ENCODE measurements at regions of chr3 and their contacts with region 1.

Region 1: DNA sequence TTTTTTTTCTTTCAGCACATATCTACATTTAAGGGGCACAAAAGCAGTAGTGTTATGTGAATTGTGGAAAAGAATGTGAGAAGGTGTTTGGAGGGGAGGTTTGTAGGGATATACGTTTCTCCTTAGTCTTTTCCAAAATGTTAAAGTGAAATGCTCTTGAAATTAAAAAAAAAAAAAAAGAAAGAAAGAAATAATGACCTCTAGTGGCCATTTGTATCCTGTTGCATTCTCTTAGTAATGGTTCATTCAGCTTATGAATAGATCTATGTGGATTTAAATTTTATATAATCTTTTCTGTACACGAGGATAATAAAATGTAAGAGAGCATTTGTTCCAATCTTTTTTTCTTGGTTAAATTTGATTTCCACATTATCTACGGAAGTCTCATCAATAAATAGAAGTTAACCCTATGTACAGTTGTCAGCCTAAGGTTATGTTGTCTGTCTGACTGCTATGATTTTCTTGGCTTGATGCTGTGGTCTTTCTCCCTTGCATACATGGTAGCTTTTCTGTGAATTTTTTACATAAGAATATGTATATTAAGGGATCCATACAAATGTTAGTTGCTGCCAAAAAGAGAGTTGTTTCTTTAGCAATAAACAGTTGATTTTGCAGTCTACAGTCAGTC is 1.7 kb downstream of the P2RY13 start:
- DNase-seq: no peak
- H3K27ac ChIP-seq: no peak overlapping the region
- CTCF ChIP-seq: peak; percentile 80

Region 2: DNA sequence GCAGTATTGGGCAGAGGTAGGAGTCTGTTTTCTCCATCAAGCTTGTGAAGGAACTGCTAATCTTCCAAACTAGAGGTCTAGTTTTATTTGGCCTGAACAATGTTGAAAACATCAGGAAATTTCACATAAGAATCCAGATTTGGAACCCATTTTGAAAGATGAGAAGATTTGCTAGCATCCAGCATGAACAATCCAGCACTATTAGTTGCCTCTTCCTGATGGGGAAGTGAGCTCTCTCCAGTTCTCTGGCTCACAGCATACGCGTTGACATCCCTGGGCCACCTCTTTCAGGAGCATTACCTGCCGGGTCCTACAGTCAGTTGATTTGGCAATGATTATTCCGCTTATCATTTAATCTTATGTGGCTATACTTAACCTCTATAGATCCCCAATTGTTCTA is 21.9 kb before region 1 on chr3:
- CTCF ChIA-PET with region 1: interaction called, 16 read pairs
- POLR2A ChIA-PET with region 1: no interaction called
- DNase-seq: no peak
- H3K27ac ChIP-seq: peak overlapping the region; percentile 95
- CTCF ChIP-seq: no peak

Region 3: GRCh38 chr3:151356794-151357462 is 29.2 kb after region 1 on chr3:
- CTCF ChIA-PET with region 1: no interaction called
- POLR2A ChIA-PET with region 1: no interaction called
- DNase-seq: no peak
- H3K27ac ChIP-seq: no peak overlapping the region
- CTCF ChIP-seq: no peak

Region 4: DNA sequence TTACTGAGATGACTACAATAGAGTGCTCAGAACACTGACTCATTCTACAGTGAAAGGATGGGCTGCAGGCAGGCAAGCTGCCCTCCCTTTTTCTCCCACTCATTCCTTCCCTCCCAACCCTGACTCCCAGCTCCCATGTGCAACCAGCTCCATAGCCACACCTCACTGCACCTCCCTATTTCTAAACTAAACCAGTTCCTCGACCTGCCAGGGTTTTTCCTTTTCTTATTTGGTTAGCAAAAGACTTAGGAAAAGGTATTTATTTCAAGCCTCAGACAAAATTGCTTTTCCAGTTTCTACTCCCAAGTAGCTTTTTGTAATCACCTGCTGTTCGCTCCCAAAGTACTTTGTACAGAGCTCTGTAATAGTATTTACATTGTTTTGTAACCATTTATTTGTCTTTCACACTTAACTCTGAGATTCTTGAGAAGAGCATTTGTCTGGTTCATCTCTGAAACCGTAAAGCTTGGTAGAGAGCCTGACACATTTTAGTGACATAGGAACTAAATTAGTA is 488.5 kb after region 1 on chr3:
- CTCF ChIA-PET with region 1: no interaction called
- POLR2A ChIA-PET with region 1: no interaction called
- DNase-seq: peak; percentile 61
- H3K27ac ChIP-seq: no peak overlapping the region
- CTCF ChIP-seq: no peak